ENCODE measurements at regions of chr6 and their contacts with region 1.

Region 1: DNA sequence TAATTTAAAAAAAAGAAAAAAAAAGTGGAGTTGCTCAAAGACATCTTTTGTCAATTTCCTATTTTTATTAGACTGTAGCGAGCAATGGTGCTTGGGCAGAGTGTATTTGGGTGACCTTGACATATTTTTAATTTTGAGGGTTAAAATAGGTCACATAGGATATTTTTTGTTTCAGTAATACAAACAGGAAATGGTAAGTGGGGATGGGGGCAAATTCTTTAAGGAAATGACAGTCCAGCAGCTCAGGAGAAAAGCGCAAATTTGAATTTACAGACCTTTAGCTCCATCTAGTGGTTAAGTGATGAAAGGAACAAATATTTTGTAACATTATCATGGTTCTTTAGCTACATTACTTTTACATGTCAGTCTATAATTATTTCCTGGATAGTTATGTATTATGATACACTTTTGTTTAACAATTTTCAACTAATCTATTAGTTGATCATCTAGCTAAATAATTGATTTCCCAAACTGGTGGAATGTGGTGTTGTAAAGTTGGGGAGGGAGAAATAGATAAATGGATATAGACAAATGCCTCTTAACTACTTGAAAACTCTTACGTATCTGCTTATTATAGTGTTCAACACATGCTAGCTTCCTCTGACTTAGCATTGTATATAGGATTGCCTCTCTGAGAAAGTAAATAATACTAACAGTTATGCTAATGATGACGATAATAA is 10.0 kb downstream of the CITED2 start:
- DNase-seq: no peak
- ATAC-seq: peak; percentile 18 to 50

Region 2: GRCh38 chr6:138817822-138818308 is 546.6 kb before region 1 on chr6:
- intact Hi-C with region 1: loop called (anchors 5 to 10 kb)
- DNase-seq: no peak
- ATAC-seq: peak in 1 of 2 donors; percentile 17

Region 3: DNA sequence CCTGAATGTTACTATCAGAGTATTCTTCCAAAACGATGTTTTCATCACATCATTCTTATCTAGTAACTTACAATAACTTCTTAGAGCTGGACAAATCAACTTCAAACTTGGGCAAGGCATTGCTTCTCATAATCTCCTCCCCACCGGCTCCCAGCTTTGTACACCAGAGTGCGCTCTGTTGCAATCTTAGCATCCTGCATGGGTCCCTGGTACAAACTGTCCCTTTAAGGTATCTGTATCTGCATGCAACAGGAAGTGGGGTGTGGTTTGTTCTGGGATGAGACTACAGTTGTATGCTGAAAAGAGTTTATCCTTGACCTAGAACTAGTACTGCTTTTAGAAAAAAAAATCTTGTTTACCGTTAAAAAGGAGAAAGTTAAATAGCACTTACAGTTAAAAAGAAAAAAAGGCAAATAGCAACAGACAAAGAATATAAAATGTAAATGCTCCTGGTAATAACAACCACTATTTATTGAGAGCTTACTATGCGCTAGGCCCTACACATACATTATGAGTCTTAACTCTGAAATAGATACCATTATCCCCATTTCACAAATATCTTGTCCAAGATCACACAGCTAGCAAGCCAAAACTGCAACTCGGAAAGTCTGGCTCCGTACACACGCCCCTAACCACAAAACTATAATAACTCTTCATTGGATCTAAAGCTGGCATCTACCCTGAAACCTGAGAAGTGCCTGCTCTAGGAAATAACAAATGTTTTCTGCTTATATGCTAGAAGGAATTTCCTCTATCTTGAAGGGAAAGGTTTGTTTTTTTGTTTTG is 239.4 kb before region 1 on chr6:
- intact Hi-C with region 1: loop called (anchors 5 to 10 kb)
- DNase-seq: peak; percentile 67
- ATAC-seq: peak; percentile 98 to 99

Region 4: DNA sequence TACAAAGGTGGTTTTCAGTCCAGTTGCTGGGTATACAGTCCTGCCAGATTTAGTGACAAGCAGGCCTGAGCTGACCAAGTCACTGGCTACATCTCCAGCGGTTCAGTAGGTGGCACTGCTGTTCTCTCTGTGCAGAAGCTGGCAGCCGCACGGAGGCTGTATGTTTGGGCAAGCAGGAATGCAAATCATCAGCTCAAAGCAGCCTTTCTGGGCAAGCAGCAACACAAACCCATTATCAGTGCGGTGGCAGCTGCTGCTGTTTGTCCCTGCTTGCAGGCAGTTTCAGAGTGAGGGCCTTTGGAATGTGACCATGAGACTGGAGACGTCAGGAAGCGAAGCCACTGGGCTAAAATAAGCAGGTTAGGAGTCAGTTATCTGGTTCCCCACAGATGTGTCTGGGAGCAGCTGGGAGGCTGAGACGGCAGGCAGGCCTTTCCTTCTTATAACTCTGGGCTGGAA is 145.1 kb before region 1 on chr6:
- intact Hi-C with region 1: loop called (anchors 1 to 2 kb)
- DNase-seq: peak; percentile 88
- ATAC-seq: peak; percentile 98 to 99

Region 5: DNA sequence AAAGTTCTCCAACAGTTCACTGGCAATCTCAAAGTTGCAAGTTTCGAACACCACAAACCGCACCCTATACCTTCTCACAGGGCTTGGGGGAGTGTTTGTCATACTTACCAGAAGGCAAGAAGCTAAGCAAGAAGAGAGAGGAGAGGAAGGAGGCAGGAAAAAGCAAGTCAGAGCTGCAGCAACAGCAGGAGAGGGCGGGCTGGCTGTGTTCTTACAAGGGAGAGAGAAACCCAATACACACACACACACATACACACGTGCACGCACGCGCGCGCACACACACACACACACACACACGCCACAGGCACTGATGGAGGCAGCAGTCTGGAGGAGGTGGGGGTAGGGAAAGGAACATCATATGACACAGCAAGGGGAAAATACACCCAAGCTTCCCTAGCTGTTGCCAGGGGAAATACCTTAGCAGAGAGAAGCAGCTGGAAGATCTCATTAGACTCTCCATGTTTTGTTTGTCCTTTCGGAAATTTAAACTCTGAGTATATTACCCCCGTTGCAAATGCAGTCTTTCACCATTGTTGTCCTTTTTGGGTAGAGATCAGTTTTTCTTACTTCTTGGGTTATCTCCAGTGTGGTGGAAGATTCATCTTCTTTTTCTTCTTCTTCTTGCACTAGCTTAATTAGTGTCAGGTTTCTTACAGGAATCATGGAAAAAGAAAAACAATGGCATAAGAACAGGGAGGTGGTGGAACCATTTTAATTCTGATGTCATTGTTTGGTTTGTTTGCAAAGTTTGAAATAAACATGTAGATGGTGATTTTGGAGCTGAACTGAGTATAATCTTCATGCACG is 72.4 kb before region 1 on chr6 and contains the start of gene TXLNB:
- intact Hi-C with region 1: loop called in 1 of 2 experiments (anchors 10 kb)
- DNase-seq: peak; percentile 81
- ATAC-seq: peak; percentile 64 to 86
- total RNA-seq, gene TXLNB: 52.4 to 60.4 TPM

Measured in left cardiac atrium (tissue), 4 donors.